ENCODE measurements at regions of chr5 and their contacts with region 1.

Region 1: GRCh38 chr5:134113902-134114875 is at the start of gene TCF7:
- DNase-seq: peak; percentile 76
- H3K4me3 Mint-ChIP-seq: peak within 1 kb of the TSS; percentile 78
- H3K27ac Mint-ChIP-seq: no peak within 1 kb of the TSS
- H3K4me1 Mint-ChIP-seq: peaks cover 57% of the 10 kb centered on the region
- H3K27me3 Mint-ChIP-seq: peaks cover 67% of the 10 kb centered on the region
- total RNA-seq, gene TCF7: 19.2 to 21.9 TPM

Region 2: GRCh38 chr5:133895979-133896845 is 218.0 kb before region 1 on chr5:
- CTCF ChIA-PET with region 1: no interaction called
- POLR2A ChIA-PET with region 1: no interaction called
- DNase-seq: no peak
- H3K4me3 Mint-ChIP-seq: no peak overlapping the region
- H3K27ac Mint-ChIP-seq: no peak overlapping the region
- H3K4me1 Mint-ChIP-seq: no peaks in the 10 kb centered on the region
- H3K27me3 Mint-ChIP-seq: peaks cover 3% of the 10 kb centered on the region

Region 3: GRCh38 chr5:134125039-134126015 is 11.1 kb after region 1 on chr5:
- CTCF ChIA-PET with region 1: interaction called, 4 read pairs
- POLR2A ChIA-PET with region 1: interaction called, 18 read pairs
- DNase-seq: no peak
- H3K4me3 Mint-ChIP-seq: no peak overlapping the region
- H3K27ac Mint-ChIP-seq: no peak overlapping the region
- H3K4me1 Mint-ChIP-seq: peaks cover 72% of the 10 kb centered on the region
- H3K27me3 Mint-ChIP-seq: peaks cover 39% of the 10 kb centered on the region

Region 4: GRCh38 chr5:134132372-134133034 is 18.3 kb after region 1 on chr5:
- CTCF ChIA-PET with region 1: interaction called, 4 read pairs
- POLR2A ChIA-PET with region 1: interaction called, 18 read pairs
- DNase-seq: peak; percentile 68
- H3K4me3 Mint-ChIP-seq: no peak overlapping the region
- H3K27ac Mint-ChIP-seq: peak overlapping the region; percentile 78
- H3K4me1 Mint-ChIP-seq: peaks cover 77% of the 10 kb centered on the region
- H3K27me3 Mint-ChIP-seq: peaks cover 39% of the 10 kb centered on the region